ENCODE measurements at regions of chr4 and their contacts with region 1.

Region 1: GRCh38 chr4:153448003-153448731 is 18.0 kb upstream of the TMEM131L start:
- DNase-seq: no peak
- ATAC-seq: peak; percentile 37 to 62
- H3K4me3 ChIP-seq: peak overlapping the region; percentile 34 to 48 (median 40)
- H3K27ac ChIP-seq: peak overlapping the region; percentile 20 to 64 (median 52)
- H3K4me1 ChIP-seq: peaks cover 13 to 15% of the 10 kb centered on the region in 2 donors
- H3K27me3 ChIP-seq: no peaks in the 10 kb centered on the region
- CTCF ChIP-seq: no peak
- POLR2A ChIP-seq: no peak

Region 2: GRCh38 chr4:153222707-153223426 is 225.3 kb before region 1 on chr4:
- in situ Hi-C with region 1: no loop called
- intact Hi-C with region 1: no loop called
- DNase-seq: peak; percentile 28 to 70
- ATAC-seq: peak; percentile 74 to 81
- H3K4me3 ChIP-seq: peak overlapping the region; percentile 65 to 79 (median 74)
- H3K27ac ChIP-seq: peak overlapping the region; percentile 85 to 90 (median 86)
- H3K4me1 ChIP-seq: peaks cover 8 to 12% of the 10 kb centered on the region in 2 donors
- H3K27me3 ChIP-seq: no peaks in the 10 kb centered on the region
- CTCF ChIP-seq: no peak
- POLR2A ChIP-seq: peak in 1 of 2 donors; percentile 3

Region 3: GRCh38 chr4:153432968-153433753 is 15.0 kb before region 1 on chr4:
- in situ Hi-C with region 1: no loop called
- intact Hi-C with region 1: loop called (anchors 1 kb)
- DNase-seq: peak; percentile 26 to 62
- ATAC-seq: peak; percentile 80 to 90
- H3K4me3 ChIP-seq: peak overlapping the region in 2 of 4 donors; percentile 19 to 22
- H3K27ac ChIP-seq: peak overlapping the region in 2 of 4 donors; percentile 20 to 51
- H3K4me1 ChIP-seq: peaks cover 5 to 7% of the 10 kb centered on the region in 2 donors
- H3K27me3 ChIP-seq: no peaks in the 10 kb centered on the region
- CTCF ChIP-seq: peak; percentile 60 to 70 (median 66)
- POLR2A ChIP-seq: no peak

Measured in gastrocnemius medialis (tissue), 4 donors.